GM12878 (cell line): ENCODE measurements at regions of chr4 and their contacts with region 1.

Region 1: GRCh38 chr4:1218634-1219565 is 30.0 kb downstream of the CTBP1 start:
- DNase-seq: peak; percentile 92
- ATAC-seq: peak; percentile 91
- H3K4me3 ChIP-seq: peak overlapping the region; percentile 45; the same call in 1 of the 2 replicates
- H3K27ac ChIP-seq: peak overlapping the region; percentile 88
- H3K4me1 ChIP-seq: peaks cover 51% of the 10 kb centered on the region
- H3K27me3 ChIP-seq: no peaks in the 10 kb centered on the region
- CTCF ChIP-seq: no peak
- EP300 ChIP-seq: peak; percentile 87 to 88; a peak in 3 of 4 replicates
- POLR2A ChIP-seq: no peak
- RAD21 ChIP-seq: no peak

Region 2: DNA sequence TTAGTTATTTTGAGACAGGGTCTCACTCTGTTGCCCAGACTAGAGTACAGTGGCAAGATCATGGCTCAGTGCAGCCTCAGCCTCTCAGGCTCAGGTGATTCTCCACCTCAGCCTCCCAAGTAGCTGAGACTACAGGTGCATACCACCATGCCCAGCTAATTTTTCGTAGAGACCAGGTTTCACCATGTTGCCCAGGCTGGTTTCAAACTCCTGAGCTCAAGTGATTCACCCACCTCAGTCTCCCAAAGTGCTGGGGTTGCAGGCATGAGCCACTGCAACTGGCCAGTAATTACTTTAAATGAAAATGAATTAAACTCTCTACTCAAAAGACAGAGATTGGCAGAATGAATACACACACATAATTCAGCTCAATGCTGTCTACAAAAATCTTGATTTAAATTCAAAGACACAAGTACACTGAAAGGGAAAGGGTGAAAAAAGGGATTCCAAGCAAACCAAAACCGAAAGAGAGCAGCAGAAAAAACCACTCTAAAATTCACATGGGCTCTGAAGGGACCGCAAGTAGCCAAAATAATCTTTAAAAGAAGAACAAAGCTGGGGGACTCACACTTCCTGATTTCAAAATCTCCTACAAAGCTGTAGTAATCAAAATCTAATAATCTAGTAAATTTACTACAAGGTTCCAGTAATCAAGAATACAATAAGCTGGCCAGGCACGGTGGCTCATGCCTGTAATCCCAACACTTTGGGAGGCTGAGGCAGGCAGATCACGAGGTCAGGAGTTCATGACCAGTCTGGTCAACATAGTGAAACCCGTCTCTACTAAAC is 34.7 kb before region 1 on chr4:
- CTCF ChIA-PET with region 1: interaction called, 4 read pairs
- POLR2A ChIA-PET with region 1: interaction called, 4 read pairs
- RAD21 ChIA-PET with region 1: interaction called, 11 read pairs
- SMC1A ChIA-PET with region 1: interaction called, 11 read pairs
- in situ Hi-C with region 1: no loop called
- intact Hi-C with region 1: loop called (anchors 5 kb)
- DNase-seq: peak; percentile 64
- ATAC-seq: peak; percentile 82
- H3K4me3 ChIP-seq: peak overlapping the region; percentile 60
- H3K27ac ChIP-seq: peak overlapping the region; percentile 57
- H3K4me1 ChIP-seq: peaks cover 27% of the 10 kb centered on the region
- H3K27me3 ChIP-seq: no peaks in the 10 kb centered on the region
- CTCF ChIP-seq: no peak
- EP300 ChIP-seq: 0 out of 4 replicates have a peak, but pooled peaks of 1 of the 2 experiments have one; percentile 39
- POLR2A ChIP-seq: no peak
- RAD21 ChIP-seq: no peak

Region 3: DNA sequence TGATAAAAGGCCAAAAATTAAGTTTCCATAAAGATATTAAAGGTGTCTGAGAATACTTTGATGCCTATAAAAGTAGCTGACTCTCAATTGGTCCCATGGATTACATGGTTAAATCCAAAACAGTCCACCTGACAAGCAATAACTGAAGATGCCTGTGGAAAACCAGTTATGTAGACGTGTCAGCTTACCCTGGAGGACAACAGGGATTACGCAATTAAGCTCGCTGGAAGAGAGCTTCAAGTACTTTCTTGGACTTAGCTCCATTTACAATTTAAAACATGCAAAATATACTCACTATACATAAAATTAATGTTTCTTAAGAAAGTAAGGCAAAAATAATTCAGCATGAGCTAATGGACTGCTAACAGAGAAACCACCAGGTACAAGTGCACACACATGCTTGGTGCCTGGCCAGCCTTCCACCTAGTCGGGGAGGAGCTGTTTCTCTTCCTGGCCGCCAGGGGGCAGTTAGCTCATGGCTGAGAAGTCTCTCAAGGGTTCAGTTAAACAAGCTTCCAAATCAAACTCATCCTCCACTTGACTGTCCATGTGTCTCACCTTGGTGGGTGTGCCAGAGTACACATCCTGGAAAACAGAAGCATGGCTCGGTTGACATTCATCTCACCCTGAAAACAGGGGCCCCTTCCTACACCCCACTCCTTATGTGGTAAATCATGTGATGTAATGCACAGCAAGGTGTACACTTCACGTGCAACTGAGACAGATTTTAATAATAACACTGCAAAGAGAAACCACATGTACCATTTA is 474.4 kb after region 1 on chr4:
- CTCF ChIA-PET with region 1: no interaction called
- POLR2A ChIA-PET with region 1: no interaction called
- RAD21 ChIA-PET with region 1: no interaction called
- SMC1A ChIA-PET with region 1: no interaction called
- in situ Hi-C with region 1: no loop called
- intact Hi-C with region 1: no loop called
- DNase-seq: no peak
- ATAC-seq: peak; percentile 99
- H3K4me3 ChIP-seq: no peak overlapping the region
- H3K27ac ChIP-seq: no peak overlapping the region
- H3K4me1 ChIP-seq: no peaks in the 10 kb centered on the region
- H3K27me3 ChIP-seq: no peaks in the 10 kb centered on the region
- CTCF ChIP-seq: peak; percentile 91 to 97 (median 97); a peak in 5 of 6 replicates
- EP300 ChIP-seq: no peak
- POLR2A ChIP-seq: 0 out of 2 replicates have a peak, but pooled peaks have one; percentile 17
- RAD21 ChIP-seq: peak; percentile 69